HepG2 (cell line): ENCODE measurements at regions of chr17 and their contacts with region 1.

Region 1: DNA sequence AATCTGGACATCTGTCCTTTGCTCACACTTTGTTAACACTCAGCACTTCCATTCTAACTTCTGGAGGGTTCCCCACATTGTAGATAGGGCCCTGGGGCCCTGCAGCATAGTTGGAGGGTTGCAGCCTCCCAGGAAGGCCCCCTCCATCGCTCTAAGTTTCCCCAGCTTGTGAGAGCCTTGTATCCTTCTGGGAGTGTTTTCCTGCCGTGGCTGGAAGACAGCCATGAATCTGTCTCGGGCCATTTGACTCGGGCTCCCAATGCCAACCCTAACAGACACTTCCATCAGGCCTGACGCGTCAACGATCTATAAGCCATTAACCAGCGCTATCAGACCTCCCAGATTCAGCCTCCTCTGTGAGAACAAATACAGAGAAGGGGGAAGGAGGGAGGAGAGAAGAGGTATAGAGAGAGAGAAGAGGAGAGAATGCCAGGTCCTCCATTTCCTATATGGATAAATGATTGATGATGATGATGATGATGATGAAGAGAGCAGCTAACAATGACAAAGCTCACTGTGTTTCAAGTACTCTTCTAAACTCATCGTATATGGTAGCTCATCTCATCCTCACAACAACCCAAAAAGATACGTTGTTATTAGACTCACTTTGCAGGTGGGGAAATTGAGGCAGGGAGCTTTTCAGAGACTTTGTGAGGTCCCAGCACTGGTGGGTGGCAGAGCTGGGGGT is 263.5 kb upstream of the RPL38 start:
- DNase-seq: no peak
- ATAC-seq: no peak
- H3K4me3 ChIP-seq: no peak overlapping the region
- H3K27ac ChIP-seq: no peak overlapping the region
- H3K4me1 ChIP-seq: peaks cover 10% of the 10 kb centered on the region
- H3K27me3 ChIP-seq: peaks cover 4 to 22% of the 10 kb centered on the region in 2 experiments; a peak in 2 of 5 replicates
- CTCF ChIP-seq: no peak
- EP300 ChIP-seq: no peak
- POLR2A ChIP-seq: no peak
- RAD21 ChIP-seq: no peak

Region 2: DNA sequence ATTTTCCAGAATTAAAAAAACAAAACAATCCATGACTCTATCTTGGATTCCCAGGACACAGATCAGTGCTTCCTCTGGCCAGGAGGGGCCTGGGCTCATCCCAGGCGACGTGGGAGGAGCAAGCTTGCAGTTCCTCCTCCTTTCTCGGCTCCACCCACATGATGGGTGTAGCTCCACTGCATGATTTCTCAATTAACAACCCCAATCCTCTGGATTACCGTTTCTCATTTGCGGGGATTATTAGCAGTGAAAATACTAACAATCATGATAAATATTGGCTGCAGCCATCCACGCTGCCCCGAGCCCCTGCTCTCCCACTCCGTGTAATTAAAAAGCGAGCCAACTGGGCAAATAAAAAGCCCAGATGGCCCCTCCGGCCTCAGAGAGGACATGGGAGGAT is 249.3 kb before region 1 on chr17:
- CTCF ChIA-PET with region 1: no interaction called
- POLR2A ChIA-PET with region 1: no interaction called
- in situ Hi-C with region 1: no loop called
- intact Hi-C with region 1: no loop called
- DNase-seq: no peak
- ATAC-seq: no peak
- H3K4me3 ChIP-seq: no peak overlapping the region
- H3K27ac ChIP-seq: no peak overlapping the region
- H3K4me1 ChIP-seq: peaks cover 17% of the 10 kb centered on the region
- H3K27me3 ChIP-seq: peaks cover 0 to 5% of the 10 kb centered on the region in 2 experiments; a peak in 1 of 5 replicates
- CTCF ChIP-seq: no peak
- EP300 ChIP-seq: no peak
- POLR2A ChIP-seq: no peak
- RAD21 ChIP-seq: no peak

Region 3: DNA sequence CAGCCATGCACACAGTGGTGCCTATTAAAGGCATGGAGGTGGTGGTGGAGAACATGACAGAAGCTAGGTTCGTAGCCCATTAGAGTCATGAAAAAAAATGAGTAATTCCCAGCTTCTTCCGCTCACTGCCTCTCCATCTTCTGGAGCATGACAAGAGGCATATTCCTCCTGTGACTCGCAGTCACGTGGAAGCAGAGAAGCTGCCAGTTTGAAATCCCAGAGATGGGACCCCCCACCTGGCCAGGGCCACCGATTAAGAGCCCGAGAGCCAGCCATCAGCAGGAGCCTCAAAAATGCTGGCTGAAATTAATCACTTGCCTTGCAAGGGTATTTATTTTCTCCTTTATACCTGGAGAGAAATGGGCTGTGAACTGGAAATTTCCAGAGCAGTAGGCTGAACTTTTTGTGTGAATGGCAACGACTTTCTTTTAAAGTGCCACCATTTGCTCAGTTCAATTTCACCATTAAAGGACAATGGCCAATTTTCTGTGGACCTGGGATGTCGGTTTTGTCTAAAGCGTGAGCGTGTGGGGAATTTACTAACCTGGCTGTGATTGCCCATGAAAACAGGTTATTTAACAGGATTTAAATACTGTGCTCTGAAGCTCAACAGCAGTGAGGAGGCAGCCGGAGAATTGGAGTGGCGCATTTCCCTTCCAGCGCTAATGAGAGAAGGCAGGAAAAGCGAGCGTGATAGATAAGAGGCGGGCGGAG is 106.0 kb before region 1 on chr17:
- CTCF ChIA-PET with region 1: no interaction called
- POLR2A ChIA-PET with region 1: no interaction called
- in situ Hi-C with region 1: no loop called
- intact Hi-C with region 1: no loop called
- DNase-seq: no peak
- ATAC-seq: no peak
- H3K4me3 ChIP-seq: no peak overlapping the region
- H3K27ac ChIP-seq: no peak overlapping the region
- H3K4me1 ChIP-seq: no peaks in the 10 kb centered on the region
- H3K27me3 ChIP-seq: peaks cover 2 to 31% of the 10 kb centered on the region in 2 experiments; a peak in 2 of 5 replicates
- CTCF ChIP-seq: no peak
- EP300 ChIP-seq: no peak
- POLR2A ChIP-seq: no peak
- RAD21 ChIP-seq: no peak

Region 4: DNA sequence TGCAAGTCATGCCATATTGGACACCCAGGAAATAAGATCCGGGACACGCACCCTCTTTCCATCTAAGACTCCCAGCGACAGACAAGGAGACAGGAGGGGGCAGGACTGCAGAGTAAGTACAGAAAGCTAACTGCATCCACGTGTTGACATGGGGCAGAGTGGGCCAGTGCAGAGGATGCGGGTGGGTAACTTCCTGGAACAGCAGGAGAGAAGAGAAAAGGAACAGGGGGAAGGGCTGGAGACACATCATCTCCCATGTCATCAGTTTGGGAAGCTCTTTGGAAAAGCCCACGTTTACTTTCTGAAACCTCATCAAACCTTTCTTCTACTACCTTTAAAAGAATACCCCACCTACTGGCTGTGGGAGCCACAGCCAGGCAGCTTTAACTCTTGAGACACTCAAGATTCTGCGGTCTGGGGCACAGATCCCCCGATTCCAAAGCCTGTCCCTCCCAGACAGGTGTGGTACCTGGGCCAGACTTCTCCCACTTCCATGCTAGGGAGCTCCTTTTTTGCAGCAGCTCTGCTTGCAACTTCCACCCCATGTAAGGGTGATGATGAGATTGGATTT is 10.0 kb before region 1 on chr17:
- CTCF ChIA-PET with region 1: no interaction called
- POLR2A ChIA-PET with region 1: no interaction called
- in situ Hi-C with region 1: no loop called
- intact Hi-C with region 1: no loop called
- DNase-seq: no peak
- ATAC-seq: no peak
- H3K4me3 ChIP-seq: no peak overlapping the region
- H3K27ac ChIP-seq: no peak overlapping the region
- H3K4me1 ChIP-seq: no peaks in the 10 kb centered on the region
- H3K27me3 ChIP-seq: peaks cover 0 to 33% of the 10 kb centered on the region in 2 experiments; a peak in 3 of 5 replicates
- CTCF ChIP-seq: no peak
- EP300 ChIP-seq: no peak
- POLR2A ChIP-seq: no peak
- RAD21 ChIP-seq: no peak

Region 5: GRCh38 chr17:74005790-74006189 is 65.8 kb after region 1 on chr17:
- CTCF ChIA-PET with region 1: no interaction called
- POLR2A ChIA-PET with region 1: no interaction called
- in situ Hi-C with region 1: no loop called
- intact Hi-C with region 1: loop called (anchors 2 kb)
- DNase-seq: no peak
- ATAC-seq: no peak
- H3K4me3 ChIP-seq: no peak overlapping the region
- H3K27ac ChIP-seq: no peak overlapping the region
- H3K4me1 ChIP-seq: no peaks in the 10 kb centered on the region
- H3K27me3 ChIP-seq: peaks cover 3 to 57% of the 10 kb centered on the region in 2 experiments; a peak in 4 of 5 replicates
- CTCF ChIP-seq: no peak
- EP300 ChIP-seq: no peak
- POLR2A ChIP-seq: no peak
- RAD21 ChIP-seq: no peak